GM12878 (cell line): ENCODE measurements at regions of chr11 and their contacts with region 1.

Region 1: DNA sequence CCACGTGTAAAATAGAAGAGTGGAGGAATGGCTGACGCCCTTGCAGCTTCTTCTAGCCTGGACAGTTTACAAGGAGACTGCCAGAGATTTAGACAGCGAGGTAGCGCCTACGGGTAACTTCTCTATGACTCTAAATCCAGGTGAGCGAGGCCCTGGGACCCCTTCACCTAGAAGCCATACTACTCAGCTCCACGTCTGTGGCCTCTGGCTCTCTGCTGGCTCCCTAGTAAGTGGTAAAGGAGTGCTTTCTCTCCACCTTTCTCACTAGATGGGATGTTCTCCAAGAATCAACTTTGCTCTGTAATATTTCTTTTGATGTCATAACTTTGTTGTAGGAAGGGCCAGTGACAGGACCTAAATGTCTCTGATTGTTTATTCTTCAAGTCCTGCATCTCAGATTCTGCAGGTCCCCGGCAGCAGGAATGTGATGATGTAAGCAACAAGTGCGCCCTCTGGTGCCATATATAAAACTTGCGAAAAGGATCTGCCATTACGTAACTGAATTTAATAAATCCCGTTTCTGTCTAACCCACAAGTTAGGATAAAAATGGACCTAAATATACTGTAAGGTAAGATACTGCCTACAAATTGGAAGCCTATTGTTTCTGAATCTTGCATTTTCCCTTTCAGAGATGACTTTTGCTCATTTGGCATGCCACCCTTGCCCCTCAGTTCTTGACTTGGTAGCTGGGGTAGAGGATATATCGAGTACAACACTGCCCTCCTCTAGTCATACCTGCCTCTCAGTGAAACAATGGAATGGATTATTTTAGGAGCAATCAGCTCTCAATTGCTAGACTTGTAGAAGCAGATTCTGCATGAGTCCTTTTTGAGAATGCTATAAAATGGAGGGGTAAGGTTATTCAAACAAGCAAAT is 11.0 kb upstream of the PTPN5 start:
- DNase-seq: peak; percentile 12
- ATAC-seq: peak; percentile 80
- H3K4me3 ChIP-seq: no peak overlapping the region
- H3K27ac ChIP-seq: no peak overlapping the region
- H3K4me1 ChIP-seq: no peaks in the 10 kb centered on the region
- H3K27me3 ChIP-seq: peaks cover 0 to 9% of the 10 kb centered on the region in 2 experiments; a peak in 2 of 4 replicates
- CTCF ChIP-seq: peak; percentile 53 to 73 (median 71); a peak in 5 of 6 replicates
- EP300 ChIP-seq: no peak
- POLR2A ChIP-seq: no peak
- RAD21 ChIP-seq: peak; percentile 65

Region 2: GRCh38 chr11:18785411-18785810 is 17.2 kb before region 1 on chr11:
- CTCF ChIA-PET with region 1: interaction called, 310 read pairs
- POLR2A ChIA-PET with region 1: interaction called, 4 read pairs
- RAD21 ChIA-PET with region 1: no interaction called
- SMC1A ChIA-PET with region 1: interaction called, 174 read pairs
- in situ Hi-C with region 1: no loop called
- intact Hi-C with region 1: no loop called
- DNase-seq: no peak
- ATAC-seq: no peak
- H3K4me3 ChIP-seq: no peak overlapping the region
- H3K27ac ChIP-seq: no peak overlapping the region
- H3K4me1 ChIP-seq: no peaks in the 10 kb centered on the region
- H3K27me3 ChIP-seq: peaks cover 3 to 5% of the 10 kb centered on the region in 2 experiments; a peak in 3 of 4 replicates
- CTCF ChIP-seq: no peak
- EP300 ChIP-seq: no peak
- POLR2A ChIP-seq: no peak
- RAD21 ChIP-seq: no peak

Region 3: DNA sequence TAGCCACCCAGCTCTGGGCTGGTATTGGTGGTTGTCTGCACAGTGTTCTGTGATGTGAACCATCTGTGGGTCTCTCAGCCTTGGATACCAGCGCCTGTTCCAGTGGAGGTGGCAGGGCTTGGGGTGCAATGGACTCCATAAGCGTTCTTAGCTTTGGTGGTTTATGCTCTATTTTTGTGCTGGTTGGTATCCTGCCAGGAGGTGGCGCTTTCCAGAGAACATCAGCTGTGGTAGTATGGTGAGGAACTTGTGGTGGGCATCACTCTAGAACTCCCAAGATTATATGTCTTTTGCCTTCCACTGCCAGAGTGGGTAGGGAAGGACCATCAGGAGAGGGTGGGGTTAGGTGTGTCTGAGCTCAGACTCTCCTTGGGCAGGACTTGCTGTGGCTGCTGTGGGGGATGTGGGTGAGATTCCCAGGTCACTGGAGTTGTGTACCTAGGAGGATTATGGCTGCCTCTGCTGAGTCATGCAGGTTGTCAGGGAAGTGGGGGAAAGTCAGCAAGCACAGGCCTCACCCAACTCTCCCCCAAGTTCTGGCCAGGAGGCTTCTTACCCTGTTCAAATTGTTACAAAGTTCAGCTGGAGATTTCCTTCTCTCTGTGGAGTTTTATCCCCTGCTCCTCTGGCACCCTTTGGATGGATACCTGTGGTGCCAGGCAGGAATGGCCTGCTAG is 210.7 kb after region 1 on chr11:
- CTCF ChIA-PET with region 1: no interaction called
- POLR2A ChIA-PET with region 1: no interaction called
- RAD21 ChIA-PET with region 1: no interaction called
- SMC1A ChIA-PET with region 1: no interaction called
- in situ Hi-C with region 1: no loop called
- intact Hi-C with region 1: no loop called
- DNase-seq: no peak
- ATAC-seq: no peak
- H3K4me3 ChIP-seq: no peak overlapping the region
- H3K27ac ChIP-seq: no peak overlapping the region
- H3K4me1 ChIP-seq: no peaks in the 10 kb centered on the region
- H3K27me3 ChIP-seq: no peaks in the 10 kb centered on the region
- CTCF ChIP-seq: peak; percentile 14 to 35 (median 26); a peak in 5 of 6 replicates
- EP300 ChIP-seq: no peak
- POLR2A ChIP-seq: no peak
- RAD21 ChIP-seq: no peak